ENCODE measurements at regions of chr4 and their contacts with region 1.

Region 1: GRCh38 chr4:156146571-156146970 is 192.9 kb upstream of the CTSO start:
- DNase-seq: no peak
- ATAC-seq: no peak
- H3K4me3 ChIP-seq: no peak overlapping the region
- H3K27ac ChIP-seq: no peak overlapping the region
- H3K4me1 ChIP-seq: no peaks in the 10 kb centered on the region
- H3K27me3 ChIP-seq: no peaks in the 10 kb centered on the region
- CTCF ChIP-seq: no peak

Region 2: DNA sequence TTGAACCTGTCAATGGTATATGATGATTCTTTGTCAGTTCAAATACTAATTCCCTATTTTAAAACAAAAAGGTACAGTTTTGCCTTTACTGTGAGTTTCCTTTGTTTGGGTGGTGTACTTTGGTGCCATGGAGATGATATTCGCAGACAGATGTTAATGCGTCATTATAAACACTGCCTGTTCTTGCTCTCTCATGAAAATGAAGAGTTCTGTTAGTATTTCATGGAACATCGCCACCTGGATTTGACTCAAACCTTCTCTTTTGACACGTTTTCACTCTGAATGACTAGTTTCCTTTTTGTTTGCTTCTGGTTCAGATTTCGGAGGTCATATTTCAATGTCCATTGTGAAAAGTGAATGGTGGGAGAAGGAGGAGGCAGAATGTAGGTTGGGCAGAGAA is 186.0 kb before region 1 on chr4:
- CTCF ChIA-PET with region 1: no interaction called
- POLR2A ChIA-PET with region 1: no interaction called
- intact Hi-C with region 1: loop called (anchors 10 kb)
- DNase-seq: peak; percentile 16
- ATAC-seq: no peak
- H3K4me3 ChIP-seq: no peak overlapping the region
- H3K27ac ChIP-seq: peak overlapping the region; percentile 66
- H3K4me1 ChIP-seq: peaks cover 21% of the 10 kb centered on the region
- H3K27me3 ChIP-seq: no peaks in the 10 kb centered on the region
- CTCF ChIP-seq: no peak

Region 3: GRCh38 chr4:156217236-156217635 is 70.7 kb after region 1 on chr4:
- CTCF ChIA-PET with region 1: no interaction called
- POLR2A ChIA-PET with region 1: no interaction called
- intact Hi-C with region 1: no loop called
- DNase-seq: no peak
- ATAC-seq: no peak
- H3K4me3 ChIP-seq: no peak overlapping the region
- H3K27ac ChIP-seq: no peak overlapping the region
- H3K4me1 ChIP-seq: no peaks in the 10 kb centered on the region
- H3K27me3 ChIP-seq: no peaks in the 10 kb centered on the region
- CTCF ChIP-seq: no peak

Region 4: GRCh38 chr4:156487107-156487506 is 340.5 kb after region 1 on chr4:
- CTCF ChIA-PET with region 1: no interaction called
- POLR2A ChIA-PET with region 1: no interaction called
- intact Hi-C with region 1: no loop called
- DNase-seq: no peak
- ATAC-seq: no peak
- H3K4me3 ChIP-seq: no peak overlapping the region
- H3K27ac ChIP-seq: no peak overlapping the region
- H3K4me1 ChIP-seq: no peaks in the 10 kb centered on the region
- H3K27me3 ChIP-seq: no peaks in the 10 kb centered on the region
- CTCF ChIP-seq: no peak